A673 (cell line): ENCODE measurements at regions of chr2 and their contacts with region 1.

Region 1: GRCh38 chr2:194166818-194167217 is 1490.2 kb upstream of the SLC39A10 start:
- DNase-seq: peak; percentile 51
- H3K4me3 ChIP-seq: no peak overlapping the region
- H3K27ac ChIP-seq: no peak overlapping the region
- H3K4me1 ChIP-seq: no peaks in the 10 kb centered on the region
- H3K27me3 ChIP-seq: no peaks in the 10 kb centered on the region
- CTCF ChIP-seq: peak; percentile 62

Region 2: GRCh38 chr2:193837111-193837737 is 329.6 kb before region 1 on chr2:
- CTCF ChIA-PET with region 1: no interaction called
- POLR2A ChIA-PET with region 1: no interaction called
- intact Hi-C with region 1: no loop called
- DNase-seq: no peak
- H3K4me3 ChIP-seq: no peak overlapping the region
- H3K27ac ChIP-seq: no peak overlapping the region
- H3K4me1 ChIP-seq: no peaks in the 10 kb centered on the region
- H3K27me3 ChIP-seq: no peaks in the 10 kb centered on the region
- CTCF ChIP-seq: no peak

Region 3: GRCh38 chr2:194214192-194214591 is 47.4 kb after region 1 on chr2:
- CTCF ChIA-PET with region 1: no interaction called
- POLR2A ChIA-PET with region 1: no interaction called
- intact Hi-C with region 1: no loop called
- DNase-seq: no peak
- H3K4me3 ChIP-seq: no peak overlapping the region
- H3K27ac ChIP-seq: no peak overlapping the region
- H3K4me1 ChIP-seq: no peaks in the 10 kb centered on the region
- H3K27me3 ChIP-seq: no peaks in the 10 kb centered on the region
- CTCF ChIP-seq: no peak

Region 4: GRCh38 chr2:194819344-194819743 is 652.5 kb after region 1 on chr2:
- CTCF ChIA-PET with region 1: no interaction called
- POLR2A ChIA-PET with region 1: no interaction called
- intact Hi-C with region 1: loop called (anchors 5 kb)
- DNase-seq: peak; percentile 15
- H3K4me3 ChIP-seq: no peak overlapping the region
- H3K27ac ChIP-seq: no peak overlapping the region
- H3K4me1 ChIP-seq: no peaks in the 10 kb centered on the region
- H3K27me3 ChIP-seq: no peaks in the 10 kb centered on the region
- CTCF ChIP-seq: peak; percentile 40; the same call in 1 of the 2 replicates